ENCODE measurements at regions of chr12 and their contacts with region 1.

Region 1: GRCh38 chr12:113048716-113049127 is 7.8 kb upstream of the DTX1 start:
- DNase-seq: peak in 1 of 2 donors; percentile 20
- ATAC-seq: peak in 1 of 2 donors; percentile 65
- H3K4me3 ChIP-seq: no peak overlapping the region
- H3K27ac ChIP-seq: no peak overlapping the region
- H3K4me1 ChIP-seq: no peaks in the 10 kb centered on the region
- H3K27me3 ChIP-seq: peaks cover 0 to 3% (median 0%) of the 10 kb centered on the region in 3 donors
- CTCF ChIP-seq: peak; percentile 35 to 74 (median 59)
- POLR2A ChIP-seq: no peak

Region 2: GRCh38 chr12:113098446-113098896 is 49.7 kb after region 1 on chr12:
- in situ Hi-C with region 1: loop called in 1 of 4 experiments (anchors 5 kb)
- intact Hi-C with region 1: loop called (anchors 2 kb)
- DNase-seq: peak; percentile 64 to 71
- ATAC-seq: peak; percentile 78 to 89
- H3K4me3 ChIP-seq: no peak overlapping the region
- H3K27ac ChIP-seq: no peak overlapping the region
- H3K4me1 ChIP-seq: no peaks in the 10 kb centered on the region
- H3K27me3 ChIP-seq: peaks cover 7 to 14% (median 8%) of the 10 kb centered on the region in 3 donors
- CTCF ChIP-seq: peak; percentile 30 to 64 (median 48)
- POLR2A ChIP-seq: no peak

Region 3: GRCh38 chr12:113120670-113121370 is 72.1 kb after region 1 on chr12:
- in situ Hi-C with region 1: no loop called
- intact Hi-C with region 1: no loop called
- DNase-seq: no peak
- ATAC-seq: no peak
- H3K4me3 ChIP-seq: no peak overlapping the region
- H3K27ac ChIP-seq: no peak overlapping the region
- H3K4me1 ChIP-seq: no peaks in the 10 kb centered on the region
- H3K27me3 ChIP-seq: no peaks in the 10 kb centered on the region
- CTCF ChIP-seq: no peak
- POLR2A ChIP-seq: no peak

Region 4: GRCh38 chr12:113152835-113153814 is 104.4 kb after region 1 on chr12:
- in situ Hi-C with region 1: loop called in 1 of 4 experiments (anchors 5 kb)
- intact Hi-C with region 1: loop called (anchors 2 kb)
- DNase-seq: no peak
- ATAC-seq: peak in 1 of 2 donors; percentile 28
- H3K4me3 ChIP-seq: peak overlapping the region; percentile 5 to 55 (median 32)
- H3K27ac ChIP-seq: no peak overlapping the region
- H3K4me1 ChIP-seq: no peaks in the 10 kb centered on the region
- H3K27me3 ChIP-seq: peaks cover 50 to 67% (median 53%) of the 10 kb centered on the region in 3 donors
- CTCF ChIP-seq: peak in 2 of 5 experiments; percentile 17 to 29
- POLR2A ChIP-seq: no peak

Region 5: DNA sequence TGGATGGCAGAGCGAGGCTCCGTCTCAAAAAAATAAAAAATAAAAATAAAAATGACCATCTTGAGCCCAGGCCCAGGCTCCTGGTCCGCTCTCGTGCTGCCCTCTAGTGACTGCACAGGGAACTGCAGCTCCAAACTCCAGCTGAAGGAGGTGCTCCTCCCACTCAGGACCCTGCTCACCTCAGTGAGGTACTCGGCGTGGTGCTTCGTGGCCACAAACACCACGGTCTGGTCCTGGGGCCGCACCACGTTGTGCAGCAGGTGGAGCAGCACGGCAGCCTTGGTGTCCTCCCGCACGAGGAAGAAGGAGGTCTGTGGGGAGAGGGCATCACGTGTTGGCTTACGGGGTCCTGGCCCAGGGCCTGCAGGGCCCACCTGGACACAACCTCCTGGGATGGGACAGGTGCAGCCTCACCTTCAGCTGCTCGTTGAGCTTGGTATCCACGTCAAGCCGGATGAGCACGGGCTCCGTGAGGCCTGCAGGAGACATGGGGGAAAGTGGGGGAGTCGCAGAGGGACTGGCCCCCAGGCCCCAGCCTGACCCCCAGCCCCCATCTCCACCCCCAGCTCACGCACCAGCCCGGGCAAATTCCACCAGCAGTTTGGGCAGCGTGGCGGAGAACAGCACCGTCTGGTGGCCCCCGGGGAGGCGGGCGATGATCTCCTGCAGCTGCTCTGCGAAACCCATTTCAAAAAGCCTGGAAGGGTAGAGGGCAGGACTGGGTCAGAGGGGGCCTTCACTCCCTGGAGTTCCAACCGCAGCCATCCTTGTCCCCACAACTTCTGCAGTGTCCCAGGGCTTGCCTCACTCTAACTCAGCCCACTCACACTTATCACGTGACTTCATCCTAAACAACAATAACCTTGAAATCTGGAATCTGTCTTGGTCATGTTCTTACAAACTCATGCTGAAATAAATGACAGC is 126.0 kb after region 1 on chr12:
- in situ Hi-C with region 1: no loop called
- intact Hi-C with region 1: loop called (anchors 5 kb)
- DNase-seq: peak in 1 of 2 donors; percentile 38
- ATAC-seq: peak in 1 of 2 donors; percentile 69
- H3K4me3 ChIP-seq: no peak overlapping the region
- H3K27ac ChIP-seq: no peak overlapping the region
- H3K4me1 ChIP-seq: no peaks in the 10 kb centered on the region
- H3K27me3 ChIP-seq: no peaks in the 10 kb centered on the region
- CTCF ChIP-seq: peak; percentile 62 to 97 (median 86)
- POLR2A ChIP-seq: no peak